ENCODE measurements at regions of chr22 and their contacts with region 1.

Region 1: GRCh38 chr22:40036591-40037225 is 42.0 kb downstream of the FAM83F start:
- DNase-seq: peak in 4 of 5 donors; percentile 29 to 40 (median 34)
- H3K4me3 ChIP-seq: no peak overlapping the region
- H3K4me3 Mint-ChIP-seq: no peak overlapping the region
- H3K27ac ChIP-seq: no peak overlapping the region
- H3K27ac Mint-ChIP-seq: no peak overlapping the region
- H3K4me1 ChIP-seq: no peaks in the 10 kb centered on the region
- H3K4me1 Mint-ChIP-seq: peaks cover 0 to 2% (median under 1%) of the 10 kb centered on the region in 4 donors
- H3K27me3 ChIP-seq: no peaks in the 10 kb centered on the region
- H3K27me3 Mint-ChIP-seq: peaks cover 11 to 19% of the 10 kb centered on the region in 2 donors

Region 2: GRCh38 chr22:39496131-39496838 is 540.4 kb before region 1 on chr22:
- CTCF ChIA-PET with region 1: interaction called, 5 read pairs
- POLR2A ChIA-PET with region 1: no interaction called
- intact Hi-C with region 1: loop called (anchors 1 kb)
- DNase-seq: peak; percentile 42 to 65 (median 46)
- H3K4me3 ChIP-seq: no peak overlapping the region
- H3K4me3 Mint-ChIP-seq: no peak overlapping the region
- H3K27ac ChIP-seq: no peak overlapping the region
- H3K27ac Mint-ChIP-seq: peak overlapping the region in 5 of 7 donors; percentile 3 to 75 (median 30)
- H3K4me1 ChIP-seq: no peaks in the 10 kb centered on the region
- H3K4me1 Mint-ChIP-seq: peaks cover 3 to 11% (median 9%) of the 10 kb centered on the region in 4 donors
- H3K27me3 ChIP-seq: no peaks in the 10 kb centered on the region
- H3K27me3 Mint-ChIP-seq: no peaks in the 10 kb centered on the region

Region 3: GRCh38 chr22:40156001-40156516 is 119.4 kb after region 1 on chr22:
- CTCF ChIA-PET with region 1: no interaction called
- POLR2A ChIA-PET with region 1: no interaction called
- intact Hi-C with region 1: no loop called
- DNase-seq: no peak
- H3K4me3 ChIP-seq: no peak overlapping the region
- H3K4me3 Mint-ChIP-seq: no peak overlapping the region
- H3K27ac ChIP-seq: no peak overlapping the region
- H3K27ac Mint-ChIP-seq: peak overlapping the region in 5 of 7 donors; percentile 1 to 79 (median 65)
- H3K4me1 ChIP-seq: no peaks in the 10 kb centered on the region
- H3K4me1 Mint-ChIP-seq: peaks cover 6 to 14% (median 8%) of the 10 kb centered on the region in 4 donors
- H3K27me3 ChIP-seq: no peaks in the 10 kb centered on the region
- H3K27me3 Mint-ChIP-seq: no peaks in the 10 kb centered on the region

Measured in CD4-positive, alpha-beta memory T cell (primary cell).